ENCODE measurements at regions of chr20 and their contacts with region 1.

Region 1: GRCh38 chr20:13348311-13349234 is 127.5 kb downstream of the ISM1 start:
- DNase-seq: no peak
- H3K4me3 ChIP-seq: no peak overlapping the region
- H3K27ac ChIP-seq: no peak overlapping the region
- H3K4me1 ChIP-seq: no peaks in the 10 kb centered on the region
- H3K27me3 ChIP-seq: no peaks in the 10 kb centered on the region
- CTCF ChIP-seq: no peak

Region 2: GRCh38 chr20:12984069-12984765 is 364.4 kb before region 1 on chr20:
- CTCF ChIA-PET with region 1: no interaction called
- POLR2A ChIA-PET with region 1: no interaction called
- intact Hi-C with region 1: no loop called
- DNase-seq: no peak
- H3K4me3 ChIP-seq: no peak overlapping the region
- H3K27ac ChIP-seq: no peak overlapping the region; the same call in 1 of the 2 replicates
- H3K4me1 ChIP-seq: peaks cover 17% of the 10 kb centered on the region
- H3K27me3 ChIP-seq: no peaks in the 10 kb centered on the region
- CTCF ChIP-seq: no peak

Region 3: GRCh38 chr20:13325033-13325432 is 23.5 kb before region 1 on chr20:
- CTCF ChIA-PET with region 1: interaction called, 16 read pairs
- POLR2A ChIA-PET with region 1: no interaction called
- intact Hi-C with region 1: no loop called
- DNase-seq: no peak
- H3K4me3 ChIP-seq: no peak overlapping the region
- H3K27ac ChIP-seq: no peak overlapping the region
- H3K4me1 ChIP-seq: no peaks in the 10 kb centered on the region
- H3K27me3 ChIP-seq: no peaks in the 10 kb centered on the region
- CTCF ChIP-seq: peak; percentile 54

Region 4: GRCh38 chr20:13736436-13737191 is 388.0 kb after region 1 on chr20:
- CTCF ChIA-PET with region 1: no interaction called
- POLR2A ChIA-PET with region 1: no interaction called
- intact Hi-C with region 1: no loop called
- DNase-seq: no peak
- H3K4me3 ChIP-seq: no peak overlapping the region
- H3K27ac ChIP-seq: no peak overlapping the region
- H3K4me1 ChIP-seq: no peaks in the 10 kb centered on the region
- H3K27me3 ChIP-seq: no peaks in the 10 kb centered on the region
- CTCF ChIP-seq: no peak